GM12878 (cell line): ENCODE measurements at regions of chr12 and their contacts with region 1.

Region 1: GRCh38 chr12:104569346-104570173 is 112.8 kb downstream of the CHST11 start:
- DNase-seq: peak; percentile 88
- ATAC-seq: peak; percentile 83
- H3K4me3 ChIP-seq: peak overlapping the region; percentile 67
- H3K27ac ChIP-seq: peak overlapping the region; percentile 95
- H3K4me1 ChIP-seq: peaks cover 43% of the 10 kb centered on the region
- H3K27me3 ChIP-seq: no peaks in the 10 kb centered on the region
- CTCF ChIP-seq: no peak
- EP300 ChIP-seq: peak; percentile 46 to 77; a peak in 1 of 4 replicates
- POLR2A ChIP-seq: peak; percentile 48; the same call in 1 of the 2 replicates
- RAD21 ChIP-seq: peak; percentile 20; the same call in 1 of the 2 replicates

Region 2: DNA sequence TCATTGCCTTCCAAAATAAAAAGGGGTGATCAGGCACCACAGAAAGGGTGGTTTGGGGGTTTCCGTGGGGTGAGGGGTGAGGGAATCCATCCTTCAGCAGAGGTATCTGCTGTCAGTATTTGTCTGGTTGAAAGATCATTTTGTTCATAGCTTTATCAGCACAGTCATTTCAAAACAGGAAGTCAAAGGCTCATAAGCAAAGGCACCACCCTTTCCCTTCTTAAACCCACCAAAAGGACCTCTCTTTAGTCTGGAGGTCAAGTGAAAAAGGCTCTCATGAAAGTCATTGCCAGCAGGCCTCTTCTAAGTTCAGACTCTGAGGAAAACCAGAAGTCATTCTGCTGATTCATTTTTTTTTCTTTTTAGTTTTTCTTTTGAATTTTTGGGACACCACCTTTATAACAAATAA is 106.6 kb before region 1 on chr12:
- CTCF ChIA-PET with region 1: interaction called, 28 read pairs
- POLR2A ChIA-PET with region 1: interaction called, 6 read pairs
- RAD21 ChIA-PET with region 1: interaction called, 88 read pairs
- SMC1A ChIA-PET with region 1: interaction called, 67 read pairs
- in situ Hi-C with region 1: loop called (anchors 5 kb)
- intact Hi-C with region 1: loop called (anchors 1 kb)
- DNase-seq: peak; percentile 88
- ATAC-seq: peak; percentile 52
- H3K4me3 ChIP-seq: peak overlapping the region; percentile 53
- H3K27ac ChIP-seq: peak overlapping the region; percentile 80
- H3K4me1 ChIP-seq: peaks cover 50% of the 10 kb centered on the region
- H3K27me3 ChIP-seq: no peaks in the 10 kb centered on the region
- CTCF ChIP-seq: no peak
- EP300 ChIP-seq: peak; percentile 25 to 85; a peak in 3 of 4 replicates
- POLR2A ChIP-seq: no peak
- RAD21 ChIP-seq: no peak

Region 3: GRCh38 chr12:104494137-104494792 is 75.3 kb before region 1 on chr12:
- CTCF ChIA-PET with region 1: interaction called, 9 read pairs
- POLR2A ChIA-PET with region 1: interaction called, 4 read pairs
- RAD21 ChIA-PET with region 1: interaction called, 27 read pairs
- SMC1A ChIA-PET with region 1: interaction called, 10 read pairs
- in situ Hi-C with region 1: no loop called
- intact Hi-C with region 1: no loop called
- DNase-seq: peak; percentile 57
- ATAC-seq: peak; percentile 77
- H3K4me3 ChIP-seq: peak overlapping the region; percentile 57
- H3K27ac ChIP-seq: peak overlapping the region; percentile 83
- H3K4me1 ChIP-seq: peaks cover 52% of the 10 kb centered on the region
- H3K27me3 ChIP-seq: no peaks in the 10 kb centered on the region
- CTCF ChIP-seq: no peak
- EP300 ChIP-seq: peak in 1 of 2 experiments; percentile 16; a peak in 1 of 4 replicates
- POLR2A ChIP-seq: peak; percentile 50
- RAD21 ChIP-seq: no peak

Region 4: GRCh38 chr12:104535369-104535768 is 34.2 kb before region 1 on chr12:
- CTCF ChIA-PET with region 1: interaction called, 3 read pairs
- POLR2A ChIA-PET with region 1: interaction called, 4 read pairs
- RAD21 ChIA-PET with region 1: interaction called, 11 read pairs
- SMC1A ChIA-PET with region 1: interaction called, 19 read pairs
- in situ Hi-C with region 1: no loop called
- intact Hi-C with region 1: no loop called
- DNase-seq: no peak
- ATAC-seq: no peak
- H3K4me3 ChIP-seq: no peak overlapping the region
- H3K27ac ChIP-seq: no peak overlapping the region
- H3K4me1 ChIP-seq: peaks cover 9% of the 10 kb centered on the region; the same call in 1 of the 2 replicates
- H3K27me3 ChIP-seq: no peaks in the 10 kb centered on the region
- CTCF ChIP-seq: no peak
- EP300 ChIP-seq: no peak
- POLR2A ChIP-seq: no peak
- RAD21 ChIP-seq: no peak

Region 5: GRCh38 chr12:104596134-104596799 is 26.7 kb after region 1 on chr12:
- CTCF ChIA-PET with region 1: interaction called, 3 read pairs
- POLR2A ChIA-PET with region 1: interaction called, 3 read pairs
- RAD21 ChIA-PET with region 1: interaction called, 7 read pairs
- SMC1A ChIA-PET with region 1: interaction called, 18 read pairs
- in situ Hi-C with region 1: no loop called
- intact Hi-C with region 1: no loop called
- DNase-seq: no peak
- ATAC-seq: no peak
- H3K4me3 ChIP-seq: no peak overlapping the region
- H3K27ac ChIP-seq: no peak overlapping the region
- H3K4me1 ChIP-seq: peaks cover 22% of the 10 kb centered on the region
- H3K27me3 ChIP-seq: no peaks in the 10 kb centered on the region
- CTCF ChIP-seq: no peak
- EP300 ChIP-seq: no peak
- POLR2A ChIP-seq: no peak
- RAD21 ChIP-seq: no peak

Region 6: DNA sequence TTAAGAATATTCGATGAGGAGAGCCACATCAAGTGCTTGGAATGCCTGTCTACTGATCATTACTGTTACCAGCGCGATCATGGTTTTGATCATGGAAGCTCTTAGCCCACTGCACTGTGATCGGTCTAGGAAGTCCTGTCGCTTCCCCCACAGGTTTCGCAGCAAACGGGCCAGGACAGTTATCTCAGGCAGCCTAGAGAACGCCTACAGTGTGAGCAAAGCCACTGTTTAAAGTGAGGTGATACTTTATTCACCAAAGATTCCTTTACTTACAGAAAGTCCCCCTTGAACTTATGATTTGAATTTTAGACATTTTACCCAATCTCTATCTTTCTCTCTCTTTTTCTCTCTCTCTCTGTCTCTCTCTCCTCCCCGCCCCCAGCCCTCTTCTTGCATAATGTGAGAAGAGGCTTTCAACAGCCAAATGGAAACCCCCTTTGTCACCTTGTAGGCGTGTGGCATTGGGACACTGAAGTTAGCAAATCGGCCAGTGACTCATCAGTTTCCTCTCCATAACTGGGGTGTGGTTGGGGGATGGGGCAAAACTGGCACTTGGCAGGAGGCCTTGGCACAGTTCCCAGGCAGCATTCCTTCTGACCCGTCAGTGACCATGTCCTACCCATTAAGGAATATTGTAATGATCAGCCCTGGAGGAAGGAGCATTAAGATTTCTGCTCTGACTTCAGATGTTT is 102.0 kb after region 1 on chr12:
- CTCF ChIA-PET with region 1: interaction called, 4 read pairs
- POLR2A ChIA-PET with region 1: interaction called, 5 read pairs
- RAD21 ChIA-PET with region 1: interaction called, 15 read pairs
- SMC1A ChIA-PET with region 1: interaction called, 3 read pairs
- in situ Hi-C with region 1: no loop called
- intact Hi-C with region 1: no loop called
- DNase-seq: peak; percentile 88
- ATAC-seq: peak; percentile 86
- H3K4me3 ChIP-seq: peak overlapping the region; percentile 49
- H3K27ac ChIP-seq: peak overlapping the region; percentile 99
- H3K4me1 ChIP-seq: peaks cover 55% of the 10 kb centered on the region
- H3K27me3 ChIP-seq: no peaks in the 10 kb centered on the region
- CTCF ChIP-seq: no peak
- EP300 ChIP-seq: peak; percentile 84 to 95; a peak in 3 of 4 replicates
- POLR2A ChIP-seq: peak; percentile 73
- RAD21 ChIP-seq: peak; percentile 48